Activated CD4-positive, alpha-beta T cell treated with anti-CD3 and anti-CD28 coated beads, Interleukin-2, amount 10 ng/mL, durations not matched to agents 24 days and 14 days (primary cell): ENCODE measurements at regions of chr7 and their contacts with region 1.

Region 1: DNA sequence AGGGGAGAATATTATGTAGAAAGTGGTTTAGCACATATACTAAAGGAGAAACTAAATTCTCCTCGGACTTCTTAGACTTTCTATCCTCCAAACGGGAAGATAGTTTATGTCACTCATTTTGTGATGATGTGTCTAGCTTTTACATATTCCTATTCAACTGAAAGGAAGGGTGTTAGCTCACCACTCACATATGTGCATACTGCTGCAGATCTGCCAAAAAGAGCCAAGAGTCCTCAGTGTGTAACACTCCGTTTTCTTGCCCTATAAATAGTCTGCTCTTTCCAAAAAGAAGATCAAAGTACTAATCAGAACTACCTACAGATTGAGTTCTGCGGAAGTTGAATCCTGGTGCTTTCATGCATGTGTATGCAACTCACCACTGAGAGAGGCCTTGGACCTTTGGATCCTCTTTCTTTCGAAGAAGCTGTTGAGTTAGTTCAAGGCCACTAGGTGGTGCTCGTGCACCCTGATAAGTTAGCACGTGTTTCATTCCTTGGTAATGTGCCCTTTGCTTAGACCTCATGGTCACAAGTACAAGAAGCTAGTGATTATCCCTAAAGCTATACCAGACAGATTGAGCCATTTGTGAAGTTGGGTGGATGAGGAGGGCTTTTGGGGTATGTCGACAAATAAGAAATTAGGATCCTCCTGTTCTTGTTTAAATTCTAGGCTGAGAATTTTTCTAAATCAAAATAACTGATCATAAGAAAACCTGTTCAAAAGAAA is 14.1 kb downstream of the YAE1 start:
- DNase-seq: peak; percentile 92
- H3K4me3 Mint-ChIP-seq: no peak overlapping the region
- H3K27ac Mint-ChIP-seq: peak overlapping the region; percentile 55
- H3K4me1 Mint-ChIP-seq: peaks cover 13% of the 10 kb centered on the region
- H3K27me3 Mint-ChIP-seq: no peaks in the 10 kb centered on the region

Region 2: GRCh38 chr7:39414224-39415035 is 165.9 kb before region 1 on chr7:
- intact Hi-C with region 1: no loop called
- DNase-seq: peak; percentile 79
- H3K4me3 Mint-ChIP-seq: peak overlapping the region; percentile 79
- H3K27ac Mint-ChIP-seq: no peak overlapping the region
- H3K4me1 Mint-ChIP-seq: peaks cover 4% of the 10 kb centered on the region
- H3K27me3 Mint-ChIP-seq: peaks cover 55% of the 10 kb centered on the region

Region 3: DNA sequence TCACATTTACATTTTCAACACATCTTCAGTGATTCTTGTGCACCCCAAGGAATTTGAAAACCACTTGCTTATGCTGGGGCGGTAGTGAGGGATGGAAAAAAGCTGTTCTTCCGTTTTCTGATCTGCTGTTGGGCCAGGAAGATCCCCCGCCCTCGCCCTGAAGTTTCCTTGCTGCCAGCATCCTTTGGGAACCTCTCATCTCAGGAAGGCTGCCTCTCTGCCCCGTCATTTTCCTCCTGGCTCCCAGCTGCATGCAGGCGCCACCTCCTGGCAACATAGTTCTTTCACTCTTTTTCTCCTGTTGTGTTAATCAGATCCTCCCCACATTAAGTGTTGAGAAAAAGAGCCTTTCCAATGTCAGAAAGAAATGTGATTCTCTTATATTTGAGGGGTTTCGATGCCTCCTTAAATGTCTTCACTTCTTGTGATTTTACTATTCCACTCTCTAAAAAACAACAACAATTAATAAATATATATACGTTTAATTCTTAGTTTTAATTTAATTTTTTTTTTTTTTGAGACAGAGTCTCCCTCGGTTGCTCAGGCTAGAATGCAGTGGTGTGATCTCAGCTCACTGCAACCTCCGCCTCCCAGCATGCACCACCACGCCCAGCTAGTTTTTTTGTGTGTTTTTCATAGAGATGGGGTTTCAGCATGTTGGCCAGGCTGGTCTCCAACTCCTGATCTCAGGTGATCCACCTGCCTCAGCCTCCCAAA is 165.9 kb after region 1 on chr7:
- intact Hi-C with region 1: loop called (anchors 1 kb)
- DNase-seq: peak; percentile 87
- H3K4me3 Mint-ChIP-seq: no peak overlapping the region
- H3K27ac Mint-ChIP-seq: no peak overlapping the region
- H3K4me1 Mint-ChIP-seq: peaks cover 6% of the 10 kb centered on the region
- H3K27me3 Mint-ChIP-seq: no peaks in the 10 kb centered on the region

Region 4: GRCh38 chr7:40057292-40057691 is 477.0 kb after region 1 on chr7:
- intact Hi-C with region 1: loop called (anchors 1 kb)
- DNase-seq: no peak
- H3K4me3 Mint-ChIP-seq: no peak overlapping the region
- H3K27ac Mint-ChIP-seq: no peak overlapping the region
- H3K4me1 Mint-ChIP-seq: peaks cover 7% of the 10 kb centered on the region
- H3K27me3 Mint-ChIP-seq: no peaks in the 10 kb centered on the region